ENCODE measurements at regions of chr5 and their contacts with region 1.

Region 1: DNA sequence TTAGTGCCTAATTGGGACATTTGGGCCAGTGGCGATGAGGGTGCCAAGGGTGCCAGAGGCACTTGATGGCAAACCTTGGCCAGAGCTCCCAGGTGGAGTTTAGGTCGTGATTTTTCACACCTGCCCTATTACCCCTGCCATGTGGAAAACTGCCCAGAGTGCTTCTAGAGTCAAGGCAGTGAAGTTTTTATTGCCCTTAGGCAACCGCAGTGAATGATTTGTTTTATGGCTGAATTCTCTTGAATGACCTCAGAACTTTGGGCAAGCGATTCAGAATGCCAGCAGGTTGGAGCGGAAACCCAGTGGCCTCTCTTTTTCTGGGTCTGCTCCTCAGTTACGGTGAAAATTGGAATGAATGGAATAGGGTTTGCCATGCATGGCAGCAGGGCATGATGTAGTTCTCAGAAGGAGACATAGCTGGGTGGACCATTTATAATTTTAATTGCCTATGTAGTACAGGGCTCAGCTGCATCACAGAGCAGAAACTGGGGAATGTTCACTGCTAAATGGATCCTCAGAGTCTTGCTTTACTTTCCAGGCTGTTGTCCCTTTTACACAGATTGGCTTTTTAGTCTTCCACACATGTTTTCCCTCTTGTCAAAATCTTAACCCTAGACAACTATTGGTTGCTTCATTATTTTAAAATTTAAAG is 820.0 kb upstream of the SEMA6A start:
- DNase-seq: no peak
- ATAC-seq: no peak
- H3K4me3 ChIP-seq: no peak overlapping the region
- H3K27ac ChIP-seq: no peak overlapping the region
- H3K4me1 ChIP-seq: no peaks in the 10 kb centered on the region
- H3K27me3 ChIP-seq: no peaks in the 10 kb centered on the region

Region 2: DNA sequence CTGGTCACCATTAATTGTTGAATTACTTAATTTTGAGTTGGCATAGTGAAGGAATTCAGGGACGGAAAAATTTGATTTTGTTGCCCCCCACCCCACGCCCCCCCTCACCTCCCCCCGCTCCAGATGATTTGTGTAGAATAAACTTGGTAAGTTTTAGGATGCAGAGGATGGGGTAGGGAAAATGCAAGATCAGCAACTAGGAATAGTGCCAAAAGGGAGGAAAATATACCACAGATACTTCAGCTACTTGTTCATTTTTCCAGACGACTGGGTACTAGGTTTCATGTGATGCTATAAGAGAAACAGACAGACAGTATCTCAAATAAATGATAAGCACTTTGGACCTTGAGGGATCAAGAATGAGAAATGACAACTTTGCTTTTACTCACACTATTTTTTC is 42.2 kb after region 1 on chr5:
- intact Hi-C with region 1: loop called in 1 of 4 experiments (anchors 2 kb)
- DNase-seq: no peak
- ATAC-seq: no peak
- H3K4me3 ChIP-seq: no peak overlapping the region
- H3K27ac ChIP-seq: no peak overlapping the region
- H3K4me1 ChIP-seq: no peaks in the 10 kb centered on the region
- H3K27me3 ChIP-seq: no peaks in the 10 kb centered on the region